ENCODE measurements at regions of chr22 and their contacts with region 1.

Region 1: GRCh38 chr22:28051787-28052356 is 132.8 kb upstream of the PITPNB start:
- DNase-seq: peak; percentile 41
- H3K4me3 Mint-ChIP-seq: no peak overlapping the region
- H3K27ac Mint-ChIP-seq: no peak overlapping the region
- H3K4me1 Mint-ChIP-seq: no peaks in the 10 kb centered on the region
- H3K27me3 Mint-ChIP-seq: no peaks in the 10 kb centered on the region

Region 2: DNA sequence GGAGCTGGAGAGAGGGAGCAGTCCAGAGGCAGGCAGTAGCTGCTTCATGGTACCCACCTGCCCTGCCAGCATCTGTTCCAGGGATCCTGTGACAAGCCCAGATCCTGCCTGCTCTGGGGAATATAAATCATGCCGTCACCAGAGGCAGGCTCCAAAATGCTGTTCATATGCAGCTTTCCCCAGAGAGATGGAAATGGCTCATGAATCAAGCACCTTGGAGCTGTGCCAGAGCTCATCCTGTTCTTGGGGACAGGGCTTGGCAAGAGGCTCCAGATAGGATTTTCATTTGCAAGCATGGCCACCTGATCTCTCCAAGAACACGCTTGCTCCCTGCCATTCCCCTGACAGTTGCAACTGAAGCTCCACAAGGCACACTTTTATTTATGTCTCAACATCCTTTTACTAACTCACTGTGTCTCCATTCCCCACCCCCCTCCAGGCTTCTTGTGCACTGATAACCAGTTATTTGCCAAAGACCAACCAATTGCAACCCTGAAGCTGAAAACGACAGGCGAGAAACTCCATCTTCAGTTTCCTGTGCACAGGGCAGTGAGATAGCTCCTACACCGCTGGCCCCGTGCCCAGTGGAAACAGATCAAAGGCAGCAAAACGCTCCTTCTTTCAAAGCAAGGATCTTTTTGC is 17.0 kb before region 1 on chr22:
- CTCF ChIA-PET with region 1: no interaction called
- POLR2A ChIA-PET with region 1: no interaction called
- intact Hi-C with region 1: no loop called
- DNase-seq: no peak
- H3K4me3 Mint-ChIP-seq: no peak overlapping the region
- H3K27ac Mint-ChIP-seq: no peak overlapping the region
- H3K4me1 Mint-ChIP-seq: peaks cover 2% of the 10 kb centered on the region
- H3K27me3 Mint-ChIP-seq: peaks cover 16% of the 10 kb centered on the region

Region 3: GRCh38 chr22:28198692-28199091 is 146.8 kb after region 1 on chr22:
- CTCF ChIA-PET with region 1: no interaction called
- POLR2A ChIA-PET with region 1: no interaction called
- intact Hi-C with region 1: no loop called
- DNase-seq: no peak
- H3K4me3 Mint-ChIP-seq: no peak overlapping the region
- H3K27ac Mint-ChIP-seq: no peak overlapping the region
- H3K4me1 Mint-ChIP-seq: no peaks in the 10 kb centered on the region
- H3K27me3 Mint-ChIP-seq: peaks cover 3% of the 10 kb centered on the region

Region 4: GRCh38 chr22:28594797-28595462 is 543.1 kb after region 1 on chr22:
- CTCF ChIA-PET with region 1: interaction called, 5 read pairs
- POLR2A ChIA-PET with region 1: no interaction called
- intact Hi-C with region 1: loop called (anchors 10 kb)
- DNase-seq: no peak
- H3K4me3 Mint-ChIP-seq: no peak overlapping the region
- H3K27ac Mint-ChIP-seq: no peak overlapping the region
- H3K4me1 Mint-ChIP-seq: no peaks in the 10 kb centered on the region
- H3K27me3 Mint-ChIP-seq: peaks cover 9% of the 10 kb centered on the region